ENCODE measurements at regions of chr6 and their contacts with region 1.

Region 1: GRCh38 chr6:29705389-29706231 is 17.6 kb upstream of the HLA-F start:
- DNase-seq: peak in 4 of 9 donors; percentile 41 to 60 (median 43)
- ATAC-seq: no peak
- H3K4me3 ChIP-seq: no peak overlapping the region
- H3K4me3 Mint-ChIP-seq: peak overlapping the region in 6 of 10 donors; percentile 20 to 77 (median 42)
- H3K27ac ChIP-seq: peak overlapping the region; percentile 2
- H3K27ac Mint-ChIP-seq: peak overlapping the region in 8 of 9 donors; percentile 16 to 95 (median 82)
- H3K4me1 ChIP-seq: peaks cover 47 to 54% of the 10 kb centered on the region in 2 donors
- H3K4me1 Mint-ChIP-seq: peaks cover 21 to 59% (median 51%) of the 10 kb centered on the region in 7 donors
- H3K27me3 ChIP-seq: no peaks in the 10 kb centered on the region
- H3K27me3 Mint-ChIP-seq: peaks cover 4 to 37% (median 8%) of the 10 kb centered on the region in 5 donors

Region 2: GRCh38 chr6:29665942-29666825 is 39.4 kb before region 1 on chr6:
- CTCF ChIA-PET with region 1: no interaction called
- POLR2A ChIA-PET with region 1: no interaction called
- intact Hi-C with region 1: no loop called
- DNase-seq: no peak
- ATAC-seq: no peak
- H3K4me3 ChIP-seq: no peak overlapping the region
- H3K4me3 Mint-ChIP-seq: no peak overlapping the region
- H3K27ac ChIP-seq: no peak overlapping the region
- H3K27ac Mint-ChIP-seq: peak overlapping the region in 1 of 9 donors; percentile 10
- H3K4me1 ChIP-seq: no peaks in the 10 kb centered on the region
- H3K4me1 Mint-ChIP-seq: no peaks in the 10 kb centered on the region
- H3K27me3 ChIP-seq: peaks cover 0 to 6% of the 10 kb centered on the region in 2 donors
- H3K27me3 Mint-ChIP-seq: peaks cover 23 to 50% (median 36%) of the 10 kb centered on the region in 5 donors

Region 3: DNA sequence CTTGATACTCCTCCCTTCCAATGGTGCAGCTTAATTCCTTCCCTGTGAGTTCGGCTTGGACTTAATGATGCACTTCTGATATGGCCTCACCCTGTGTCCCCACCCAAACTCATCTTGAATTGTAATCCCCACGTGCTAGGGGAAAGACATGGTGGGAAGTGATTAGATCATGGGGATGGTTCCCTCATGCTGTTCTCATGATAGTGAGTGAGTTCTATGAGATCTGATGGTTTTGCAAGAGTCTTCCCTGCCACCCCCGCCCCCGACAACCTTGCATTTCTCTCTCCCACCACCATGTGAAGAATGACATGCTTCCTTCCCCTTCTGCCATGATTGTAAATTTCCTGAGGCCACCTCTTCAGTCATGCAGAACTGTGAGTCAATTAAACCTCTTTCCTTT is 71.7 kb after region 1 on chr6:
- CTCF ChIA-PET with region 1: no interaction called
- POLR2A ChIA-PET with region 1: no interaction called
- intact Hi-C with region 1: no loop called
- DNase-seq: no peak
- ATAC-seq: no peak
- H3K4me3 ChIP-seq: no peak overlapping the region
- H3K4me3 Mint-ChIP-seq: no peak overlapping the region
- H3K27ac ChIP-seq: no peak overlapping the region
- H3K27ac Mint-ChIP-seq: no peak overlapping the region
- H3K4me1 ChIP-seq: no peaks in the 10 kb centered on the region
- H3K4me1 Mint-ChIP-seq: peaks cover 0 to 8% (median 0%) of the 10 kb centered on the region in 7 donors
- H3K27me3 ChIP-seq: peaks cover 0 to 3% of the 10 kb centered on the region in 2 donors
- H3K27me3 Mint-ChIP-seq: peaks cover 10 to 54% (median 53%) of the 10 kb centered on the region in 5 donors

Region 4: DNA sequence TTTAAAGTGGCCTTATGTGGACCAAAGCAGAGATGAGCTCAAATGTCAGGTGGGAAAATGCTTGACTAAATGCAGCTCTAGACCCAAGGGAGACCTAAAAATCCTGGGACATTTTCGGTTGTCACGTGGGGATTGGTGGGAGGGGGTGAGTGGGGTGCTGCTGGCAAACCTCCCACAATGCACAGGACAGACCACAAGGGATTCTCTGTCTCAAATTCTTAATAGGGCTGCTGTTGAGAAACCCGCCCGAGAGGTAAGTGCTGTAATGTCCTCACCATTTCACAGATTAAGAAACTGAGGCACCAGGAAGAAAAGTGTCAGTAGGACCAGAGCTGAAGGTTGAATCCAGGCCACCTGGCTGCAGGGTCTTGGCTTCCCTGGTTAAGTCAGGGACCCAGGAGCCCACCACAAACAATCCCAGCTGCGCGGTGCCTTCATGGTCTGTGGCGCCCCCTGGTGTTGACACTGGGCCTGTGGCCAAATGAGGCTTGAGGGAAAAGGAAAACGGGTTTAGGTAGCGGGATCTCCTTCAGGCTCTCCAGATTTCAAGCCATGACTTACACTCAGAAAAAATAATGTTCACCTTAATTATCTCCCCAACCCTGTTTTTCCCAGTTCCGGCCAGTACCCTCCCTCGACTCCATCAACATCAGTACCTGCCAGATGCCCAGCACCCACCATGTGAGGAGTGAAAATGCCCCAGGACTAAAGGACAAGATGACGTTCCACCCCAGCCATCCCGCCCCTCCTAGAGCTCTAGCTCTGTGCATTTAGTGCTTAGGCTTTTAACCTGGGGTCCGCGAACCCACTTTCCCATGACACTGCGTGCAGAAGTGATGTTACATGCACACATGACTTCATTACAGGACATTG is 129.2 kb after region 1 on chr6:
- CTCF ChIA-PET with region 1: interaction called, 11 read pairs
- POLR2A ChIA-PET with region 1: no interaction called
- intact Hi-C with region 1: loop called (anchors 1 kb)
- DNase-seq: peak in 8 of 9 donors; percentile 34 to 60 (median 47)
- ATAC-seq: peak; percentile 77
- H3K4me3 ChIP-seq: no peak overlapping the region
- H3K4me3 Mint-ChIP-seq: no peak overlapping the region
- H3K27ac ChIP-seq: no peak overlapping the region
- H3K27ac Mint-ChIP-seq: no peak overlapping the region
- H3K4me1 ChIP-seq: no peaks in the 10 kb centered on the region
- H3K4me1 Mint-ChIP-seq: peaks cover 0 to 11% (median 0%) of the 10 kb centered on the region in 7 donors
- H3K27me3 ChIP-seq: no peaks in the 10 kb centered on the region
- H3K27me3 Mint-ChIP-seq: peaks cover 46 to 79% (median 67%) of the 10 kb centered on the region in 5 donors